ENCODE measurements at regions of chr10 and their contacts with region 1.

Region 1: GRCh38 chr10:104304962-104305361 is 33.3 kb downstream of the ITPRIP start:
- DNase-seq: no peak
- ATAC-seq: peak; percentile 37

Region 2: DNA sequence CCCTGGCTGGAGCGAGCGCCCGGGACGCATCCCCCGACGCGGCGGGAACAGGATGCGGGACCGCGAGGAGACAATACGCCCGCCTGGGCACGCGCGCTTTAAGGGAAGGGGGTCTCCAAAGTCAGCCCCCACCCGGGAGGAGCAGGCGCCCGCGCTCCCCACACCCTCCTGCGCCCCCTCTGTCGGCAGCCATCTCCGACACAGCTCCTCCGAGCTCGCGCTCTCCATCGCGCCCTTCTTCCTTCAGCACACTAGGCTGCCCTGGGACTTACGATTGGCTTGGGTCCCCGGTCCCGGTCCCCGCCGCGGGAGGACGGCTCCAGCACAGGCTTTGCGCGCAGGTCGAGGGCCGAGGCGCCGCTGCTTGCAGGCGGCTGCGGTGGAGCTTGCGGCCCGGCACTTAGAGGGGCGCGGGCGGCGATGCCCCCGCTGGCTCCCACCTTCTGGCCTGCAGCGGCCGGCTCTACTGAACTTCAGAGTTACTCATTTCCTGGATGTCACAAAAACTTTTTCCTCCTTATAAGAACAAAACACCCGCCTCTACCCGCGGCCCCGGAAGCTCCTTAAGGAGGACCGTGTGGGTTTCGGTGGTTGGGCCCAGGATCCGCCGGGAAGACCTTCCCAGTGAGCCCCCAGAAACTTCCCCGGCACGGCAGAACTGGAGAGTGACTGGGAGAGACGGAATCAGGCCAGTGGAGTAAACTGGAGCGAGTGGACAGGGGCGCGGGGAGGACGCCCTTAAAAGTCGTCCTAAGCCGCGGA is 33.2 kb after region 1 on chr10 and contains the start of gene ITPRIP:
- intact Hi-C with region 1: loop called (anchors 1 kb)
- DNase-seq: peak; percentile 88
- ATAC-seq: peak; percentile 74
- total RNA-seq, gene ITPRIP: 28.2 TPM

Region 3: DNA sequence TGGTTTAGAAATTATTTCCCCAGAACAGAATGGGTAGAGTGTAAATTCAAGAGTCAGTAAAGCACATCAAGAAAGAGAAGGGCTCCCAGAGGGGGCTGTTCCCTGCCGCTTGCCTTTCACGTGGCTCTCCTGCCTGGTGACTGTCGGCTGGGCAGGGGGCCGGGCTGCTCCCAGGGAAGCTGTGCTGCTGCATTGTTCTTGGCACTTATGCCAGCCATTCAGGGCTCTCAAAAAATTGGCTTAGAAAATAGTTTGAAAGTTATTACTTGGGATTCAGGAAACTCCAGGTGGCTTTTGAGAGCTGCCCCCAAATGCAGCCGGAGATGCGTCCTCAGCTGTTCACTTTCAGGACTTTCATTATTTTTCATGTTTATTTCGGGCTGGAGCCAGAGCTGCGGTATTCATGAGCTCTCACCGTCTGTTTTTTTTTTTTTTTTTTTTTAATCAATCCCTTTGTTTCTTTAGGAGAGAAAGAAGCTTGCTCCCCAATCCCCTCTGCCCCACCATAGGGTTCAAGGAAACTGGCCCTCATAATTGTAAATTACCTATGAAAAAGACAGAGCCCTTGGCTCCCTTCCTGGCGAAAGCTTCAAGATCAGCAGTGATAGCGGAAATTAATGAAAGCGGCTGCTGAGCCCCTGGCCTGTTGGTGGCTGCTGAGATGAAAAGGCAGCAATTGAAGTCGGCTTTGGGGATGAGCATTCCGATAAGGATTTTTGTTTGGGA is 430.2 kb after region 1 on chr10:
- intact Hi-C with region 1: no loop called
- DNase-seq: peak; percentile 76
- ATAC-seq: peak; percentile 74

Measured in Right ventricle myocardium inferior (tissue), 1 donor.